Natural killer cell (primary cell): ENCODE measurements at regions of chr3 and their contacts with region 1.

Region 1: GRCh38 chr3:14144423-14145075 is 19.7 kb downstream of the TMEM43 start:
- DNase-seq: peak; percentile 77 to 96
- ATAC-seq: peak; percentile 70 to 90 (median 76)
- H3K4me3 ChIP-seq: peak overlapping the region; percentile 4
- H3K4me3 Mint-ChIP-seq: peak overlapping the region; percentile 84
- H3K27ac ChIP-seq: peak overlapping the region; percentile 97
- H3K27ac Mint-ChIP-seq: peak overlapping the region; percentile 95 to 100
- H3K4me1 ChIP-seq: peaks cover 52% of the 10 kb centered on the region
- H3K4me1 Mint-ChIP-seq: peaks cover 48 to 57% of the 10 kb centered on the region in 2 donors
- H3K27me3 ChIP-seq: no peaks in the 10 kb centered on the region
- H3K27me3 Mint-ChIP-seq: no peaks in the 10 kb centered on the region
- CTCF ChIP-seq: no peak

Region 2: DNA sequence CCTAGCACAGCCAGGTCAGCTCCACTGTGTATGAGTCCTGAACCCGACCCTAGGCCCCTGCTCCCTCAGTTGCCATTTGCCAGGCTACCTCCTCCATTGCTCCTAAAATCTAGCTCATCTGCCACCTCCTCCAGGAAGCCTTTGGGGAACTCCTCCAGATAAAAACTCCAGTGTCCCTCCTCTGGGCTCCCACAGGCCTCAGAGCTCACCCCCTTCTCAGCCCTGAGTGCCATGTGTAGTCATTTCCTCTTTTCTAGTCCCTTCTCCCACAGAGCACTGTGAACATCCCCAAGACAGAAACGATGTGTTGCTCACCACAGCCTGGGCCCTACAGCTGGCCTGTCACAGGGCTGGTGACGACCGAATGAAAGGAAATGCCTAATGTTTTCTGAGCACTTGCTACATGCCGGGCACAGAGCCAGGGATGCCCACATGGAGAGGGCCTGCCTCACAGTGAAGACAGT is 1132.3 kb before region 1 on chr3:
- intact Hi-C with region 1: loop called (anchors 5 kb)
- DNase-seq: peak; percentile 73 to 80
- ATAC-seq: peak; percentile 39 to 60 (median 40)
- H3K4me3 ChIP-seq: no peak overlapping the region
- H3K4me3 Mint-ChIP-seq: peak overlapping the region; percentile 90
- H3K27ac ChIP-seq: peak overlapping the region; percentile 100
- H3K27ac Mint-ChIP-seq: peak overlapping the region; percentile 98 to 99
- H3K4me1 ChIP-seq: peaks cover 100% of the 10 kb centered on the region
- H3K4me1 Mint-ChIP-seq: peaks cover 86 to 98% of the 10 kb centered on the region in 2 donors
- H3K27me3 ChIP-seq: no peaks in the 10 kb centered on the region
- H3K27me3 Mint-ChIP-seq: no peaks in the 10 kb centered on the region
- CTCF ChIP-seq: no peak

Region 3: GRCh38 chr3:14113965-14114635 is 30.4 kb before region 1 on chr3:
- intact Hi-C with region 1: no loop called
- DNase-seq: no peak
- ATAC-seq: no peak
- H3K4me3 ChIP-seq: no peak overlapping the region
- H3K4me3 Mint-ChIP-seq: no peak overlapping the region
- H3K27ac ChIP-seq: no peak overlapping the region
- H3K27ac Mint-ChIP-seq: no peak overlapping the region
- H3K4me1 ChIP-seq: no peaks in the 10 kb centered on the region
- H3K4me1 Mint-ChIP-seq: no peaks in the 10 kb centered on the region
- H3K27me3 ChIP-seq: no peaks in the 10 kb centered on the region
- H3K27me3 Mint-ChIP-seq: no peaks in the 10 kb centered on the region
- CTCF ChIP-seq: no peak

Region 4: DNA sequence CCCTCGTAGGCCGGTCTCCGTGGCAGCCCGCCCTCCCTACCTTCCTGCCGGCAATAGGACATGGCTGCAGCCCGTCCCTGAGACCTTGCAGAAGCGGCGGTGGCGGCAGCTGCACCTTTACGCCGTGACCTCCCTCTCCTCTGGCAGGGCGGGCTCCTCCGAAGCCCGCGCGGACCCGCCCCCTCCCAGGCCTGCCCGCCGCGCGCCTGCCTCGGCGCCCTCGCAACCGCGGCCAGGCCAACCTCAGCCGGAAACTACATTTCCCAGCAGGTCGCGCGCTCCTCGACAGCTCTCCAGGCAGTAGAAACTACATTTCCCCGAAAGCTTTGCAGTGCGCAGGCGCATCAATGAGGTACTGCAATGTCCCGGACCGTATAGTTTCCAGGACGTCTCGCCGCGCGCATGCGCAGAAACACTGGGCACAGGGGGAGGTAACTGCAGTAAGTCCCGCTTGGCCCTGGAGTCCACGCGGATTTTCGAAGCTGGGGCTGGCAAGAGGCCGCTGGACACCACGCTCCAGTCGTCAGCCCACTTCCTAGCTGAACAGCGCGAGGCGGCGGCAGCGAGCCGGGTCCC is 19.8 kb before region 1 on chr3 and contains the starts of genes CHCHD4 and TMEM43:
- intact Hi-C with region 1: loop called (anchors 1 kb)
- DNase-seq: peak; percentile 97 to 100
- ATAC-seq: peak; percentile 89 to 97 (median 90)
- H3K4me3 ChIP-seq: peak within 1 kb of the TSS; percentile 97
- H3K4me3 Mint-ChIP-seq: peak within 1 kb of the TSS; percentile 96
- H3K27ac ChIP-seq: peak within 1 kb of the TSS; percentile 91
- H3K27ac Mint-ChIP-seq: peak within 1 kb of the TSS; percentile 92 to 93
- H3K4me1 ChIP-seq: peaks cover 39% of the 10 kb centered on the region
- H3K4me1 Mint-ChIP-seq: peaks cover 50 to 55% of the 10 kb centered on the region in 2 donors
- H3K27me3 ChIP-seq: no peaks in the 10 kb centered on the region
- H3K27me3 Mint-ChIP-seq: no peaks in the 10 kb centered on the region
- CTCF ChIP-seq: no peak
- total RNA-seq, gene CHCHD4: 2.1 to 4.3 (median 3.4) TPM
- total RNA-seq, gene TMEM43: 49.5 to 61.1 (median 54.1) TPM

Region 5: DNA sequence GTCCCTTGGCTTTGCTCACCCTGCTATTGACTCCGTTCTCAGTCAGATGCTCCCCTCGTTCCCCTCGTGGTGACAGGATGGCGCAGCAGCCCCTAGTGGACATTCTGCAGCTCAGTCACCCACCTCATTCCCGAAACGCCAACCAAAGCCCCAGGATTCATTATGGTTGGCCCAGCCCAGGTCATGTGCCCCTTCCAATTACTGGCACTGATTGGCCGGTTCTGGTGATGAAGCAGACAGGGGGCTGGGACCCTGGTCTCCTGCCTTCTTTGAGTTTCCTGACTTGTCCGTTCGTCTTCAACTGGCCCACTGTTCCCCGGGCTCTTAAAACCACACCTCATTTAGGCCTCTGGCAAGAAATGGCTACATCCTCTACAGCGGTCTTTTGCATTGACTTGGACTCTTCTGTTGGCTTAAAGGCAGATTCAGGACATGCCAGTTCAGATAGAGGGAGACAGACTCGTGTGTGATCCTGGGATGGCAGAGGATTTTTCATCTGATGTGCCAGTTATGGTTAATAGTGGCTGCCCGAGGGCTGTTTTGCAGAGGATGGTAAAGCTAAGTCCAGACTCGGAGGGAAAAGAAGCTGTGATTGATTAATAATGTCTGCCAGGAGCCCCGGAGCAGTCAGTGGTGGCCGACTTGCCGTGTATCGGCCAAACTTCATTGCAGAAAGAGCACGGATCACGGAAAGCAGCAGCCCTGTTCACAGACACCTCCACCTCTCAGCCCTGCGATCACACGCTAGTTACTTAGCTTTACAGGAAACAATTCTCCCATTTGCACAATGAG is 71.9 kb after region 1 on chr3:
- intact Hi-C with region 1: loop called (anchors 1 kb)
- DNase-seq: peak; percentile 47 to 65
- ATAC-seq: peak in 2 of 3 donors; percentile 67 to 96
- H3K4me3 ChIP-seq: no peak overlapping the region
- H3K4me3 Mint-ChIP-seq: peak overlapping the region; percentile 49
- H3K27ac ChIP-seq: no peak overlapping the region
- H3K27ac Mint-ChIP-seq: peak overlapping the region in 1 of 2 donors; percentile 88
- H3K4me1 ChIP-seq: no peaks in the 10 kb centered on the region
- H3K4me1 Mint-ChIP-seq: peaks cover 0 to 15% of the 10 kb centered on the region in 2 donors
- H3K27me3 ChIP-seq: no peaks in the 10 kb centered on the region
- H3K27me3 Mint-ChIP-seq: peaks cover 8 to 9% of the 10 kb centered on the region in 2 donors
- CTCF ChIP-seq: peak; percentile 61

Region 6: GRCh38 chr3:15098503-15099363 is 954.2 kb after region 1 on chr3 and contains the start of gene RBSN:
- intact Hi-C with region 1: loop called (anchors 2 kb)
- DNase-seq: peak; percentile 94 to 98
- ATAC-seq: peak; percentile 77 to 91 (median 82)
- H3K4me3 ChIP-seq: peak within 1 kb of the TSS; percentile 77
- H3K4me3 Mint-ChIP-seq: peak within 1 kb of the TSS; percentile 84
- H3K27ac ChIP-seq: peak within 1 kb of the TSS; percentile 96
- H3K27ac Mint-ChIP-seq: peak within 1 kb of the TSS; percentile 87 to 99
- H3K4me1 ChIP-seq: peaks cover 24% of the 10 kb centered on the region
- H3K4me1 Mint-ChIP-seq: peaks cover 18 to 27% of the 10 kb centered on the region in 2 donors
- H3K27me3 ChIP-seq: no peaks in the 10 kb centered on the region
- H3K27me3 Mint-ChIP-seq: peaks cover 0 to 10% of the 10 kb centered on the region in 2 donors
- CTCF ChIP-seq: no peak
- total RNA-seq, gene RBSN: 27.6 to 34.4 (median 29.4) TPM